ENCODE measurements at regions of chr16 and their contacts with region 1.

Region 1: DNA sequence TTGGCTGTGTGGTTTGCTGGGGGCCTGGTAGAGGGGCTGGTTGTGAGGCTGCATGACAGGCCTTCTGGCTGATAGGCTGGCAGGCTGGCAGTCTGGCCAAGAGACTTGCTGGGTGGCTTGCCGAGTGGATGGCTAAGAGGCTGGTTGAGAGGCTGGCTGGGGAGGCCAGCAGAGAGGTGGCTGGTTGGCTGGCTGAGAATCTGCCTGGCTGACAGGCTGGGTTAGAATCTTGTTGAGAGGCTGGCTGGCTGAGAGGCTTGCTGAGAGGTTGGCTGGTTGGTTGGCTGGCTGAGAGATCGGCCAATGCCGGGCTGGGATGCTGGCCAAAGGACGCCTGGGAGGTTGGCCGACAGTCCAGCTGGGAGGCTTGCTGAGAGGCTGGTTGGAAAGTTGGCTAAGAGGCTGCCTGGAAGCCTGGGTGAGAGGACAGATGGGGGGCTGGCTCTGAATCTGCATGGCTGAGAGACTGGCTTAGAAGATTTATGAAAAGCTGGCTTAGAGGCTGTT is 35.9 kb upstream of the ACSM2B start:
- DNase-seq: peak in 1 of 2 donors; percentile 87
- H3K4me3 ChIP-seq: peak overlapping the region; percentile 37 to 49
- H3K27ac ChIP-seq: peak overlapping the region; percentile 98 to 99
- H3K4me1 ChIP-seq: peaks cover 6 to 19% of the 10 kb centered on the region in 2 donors
- H3K27me3 ChIP-seq: no peaks in the 10 kb centered on the region
- CTCF ChIP-seq: no peak

Region 2: DNA sequence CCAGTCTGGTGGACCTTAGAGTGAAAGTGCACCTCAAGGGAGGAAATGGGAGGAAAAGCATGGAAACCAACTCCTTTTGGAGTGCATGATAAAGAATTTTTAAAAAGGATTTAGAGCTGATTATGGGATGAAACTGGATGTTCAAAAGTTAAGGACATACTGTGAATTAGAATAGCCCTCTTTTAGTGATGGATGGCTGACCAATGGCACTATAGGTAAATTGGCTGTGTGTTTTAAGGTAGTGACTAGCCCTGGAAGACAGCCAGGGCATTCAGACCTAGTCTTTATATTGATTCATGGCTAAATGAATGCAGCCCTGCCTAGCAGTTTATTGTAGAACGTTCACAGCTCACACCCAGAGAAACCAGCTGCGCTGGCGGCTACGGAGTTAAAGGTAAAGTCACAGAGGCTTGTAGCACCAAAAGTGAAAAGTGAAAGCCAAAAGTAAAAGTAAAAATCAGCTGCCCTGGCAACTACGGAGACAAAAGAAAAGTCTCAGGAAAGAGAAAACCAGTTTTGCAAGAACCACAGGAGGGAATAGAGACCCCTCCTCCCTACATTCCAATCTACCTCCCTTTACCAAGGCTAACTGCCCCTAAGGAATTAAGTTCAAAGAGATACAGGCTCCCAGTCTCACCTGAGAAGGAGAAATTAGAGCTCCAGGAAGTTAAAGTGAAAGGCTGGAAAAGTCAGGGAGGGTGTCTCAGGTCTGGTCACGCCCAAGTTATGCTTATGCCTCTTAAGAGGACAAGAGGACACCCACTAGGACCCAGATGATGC is 63.6 kb after region 1 on chr16:
- intact Hi-C with region 1: loop called (anchors 2 kb)
- DNase-seq: no peak
- H3K4me3 ChIP-seq: peak overlapping the region; percentile 36 to 61
- H3K27ac ChIP-seq: peak overlapping the region; percentile 79 to 84
- H3K4me1 ChIP-seq: peaks cover 6 to 27% of the 10 kb centered on the region in 2 donors
- H3K27me3 ChIP-seq: no peaks in the 10 kb centered on the region
- CTCF ChIP-seq: no peak

Region 3: DNA sequence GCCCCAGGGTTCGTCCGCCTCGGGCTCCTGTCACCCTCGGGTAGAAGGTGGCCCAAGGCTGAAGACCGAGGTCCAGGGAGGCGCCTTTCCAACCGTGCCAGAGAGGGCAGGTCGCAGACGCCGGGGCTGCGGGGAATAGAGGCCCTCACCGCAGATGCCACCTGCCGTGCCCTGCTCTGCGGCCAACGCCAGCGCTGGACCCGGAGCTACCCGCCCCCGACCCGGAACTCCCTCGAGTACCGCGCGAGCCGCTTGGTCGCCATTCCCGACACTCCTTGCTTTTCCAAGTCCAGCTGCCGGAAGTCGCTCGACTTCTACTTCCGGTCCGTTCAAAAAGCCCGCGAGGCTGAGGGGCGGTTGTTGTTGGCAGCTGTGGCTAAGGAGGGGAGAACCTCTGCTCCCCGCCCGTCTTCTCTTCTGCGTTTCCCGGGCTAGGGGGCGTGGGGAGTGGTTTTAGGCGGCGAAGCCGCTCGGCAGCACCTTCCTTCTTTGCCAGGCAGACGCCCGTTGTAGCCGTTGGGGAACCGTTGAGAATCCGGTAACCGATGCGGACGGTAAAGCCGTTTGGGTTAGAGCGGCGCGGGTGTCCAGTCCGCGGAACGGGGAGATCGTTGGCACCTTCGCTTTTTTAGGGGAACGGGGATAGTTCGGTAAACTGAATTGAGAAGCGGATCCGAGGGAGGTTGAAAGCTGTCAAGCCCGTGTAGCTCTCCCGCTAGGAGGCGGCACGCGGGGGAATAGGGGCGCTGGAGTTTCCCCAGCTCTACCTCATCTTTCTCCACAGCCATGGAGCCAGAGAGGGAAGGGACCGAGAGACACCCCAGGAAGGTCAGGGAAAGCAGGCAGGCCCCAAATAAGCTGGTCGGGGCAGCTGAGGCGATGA is 194.4 kb after region 1 on chr16 and contains the starts of genes ERI2 and REXO5:
- intact Hi-C with region 1: loop called (anchors 5 kb)
- DNase-seq: peak; percentile 80 to 96
- H3K4me3 ChIP-seq: peak within 1 kb of the TSS; percentile 76 to 92
- H3K27ac ChIP-seq: peak within 1 kb of the TSS; percentile 87 to 92
- H3K4me1 ChIP-seq: peaks cover 0 to 5% of the 10 kb centered on the region in 2 donors
- H3K27me3 ChIP-seq: no peaks in the 10 kb centered on the region
- CTCF ChIP-seq: peak in 1 of 3 experiments; percentile 59
- total RNA-seq, gene ERI2: not detected
- total RNA-seq, gene REXO5: 2.1 TPM

Region 4: GRCh38 chr16:20849587-20850390 is 237.8 kb after region 1 on chr16:
- intact Hi-C with region 1: no loop called
- DNase-seq: peak in 1 of 2 donors; percentile 88
- H3K4me3 ChIP-seq: no peak overlapping the region
- H3K27ac ChIP-seq: peak overlapping the region; percentile 86 to 89
- H3K4me1 ChIP-seq: peaks cover 8 to 48% of the 10 kb centered on the region in 2 donors
- H3K27me3 ChIP-seq: no peaks in the 10 kb centered on the region
- CTCF ChIP-seq: peak; percentile 92 to 99 (median 96)